CD4-positive, alpha-beta memory T cell (primary cell): ENCODE measurements at regions of chr20 and their contacts with region 1.

Region 1: GRCh38 chr20:41317536-41318270 is at the start of gene ZHX3:
- DNase-seq: peak; percentile 91 to 97 (median 95)
- H3K4me3 ChIP-seq: peak within 1 kb of the TSS; percentile 21 to 74
- H3K4me3 Mint-ChIP-seq: peak within 1 kb of the TSS; percentile 85 to 90 (median 87)
- H3K27ac ChIP-seq: peak within 1 kb of the TSS; percentile 48
- H3K27ac Mint-ChIP-seq: peak within 1 kb of the TSS; percentile 79 to 90 (median 84)
- H3K4me1 ChIP-seq: peaks cover 16% of the 10 kb centered on the region
- H3K4me1 Mint-ChIP-seq: peaks cover 7 to 27% (median 18%) of the 10 kb centered on the region in 4 donors
- H3K27me3 ChIP-seq: no peaks in the 10 kb centered on the region
- H3K27me3 Mint-ChIP-seq: no peaks in the 10 kb centered on the region
- total RNA-seq, gene ZHX3: 5.2 to 6.3 TPM

Region 2: GRCh38 chr20:41003143-41003883 is 314.4 kb before region 1 on chr20:
- CTCF ChIA-PET with region 1: no interaction called
- POLR2A ChIA-PET with region 1: no interaction called
- intact Hi-C with region 1: loop called (anchors 1 kb)
- DNase-seq: peak; percentile 76 to 91 (median 83)
- H3K4me3 ChIP-seq: peak overlapping the region; percentile 19 to 60
- H3K4me3 Mint-ChIP-seq: peak overlapping the region; percentile 78 to 90 (median 82)
- H3K27ac ChIP-seq: peak overlapping the region; percentile 72
- H3K27ac Mint-ChIP-seq: peak overlapping the region; percentile 95 to 99 (median 97)
- H3K4me1 ChIP-seq: peaks cover 13% of the 10 kb centered on the region
- H3K4me1 Mint-ChIP-seq: peaks cover 16 to 41% (median 22%) of the 10 kb centered on the region in 4 donors
- H3K27me3 ChIP-seq: no peaks in the 10 kb centered on the region
- H3K27me3 Mint-ChIP-seq: no peaks in the 10 kb centered on the region

Region 3: GRCh38 chr20:41014557-41015088 is 303.1 kb before region 1 on chr20:
- CTCF ChIA-PET with region 1: no interaction called
- POLR2A ChIA-PET with region 1: no interaction called
- intact Hi-C with region 1: no loop called
- DNase-seq: no peak
- H3K4me3 ChIP-seq: no peak overlapping the region
- H3K4me3 Mint-ChIP-seq: no peak overlapping the region
- H3K27ac ChIP-seq: no peak overlapping the region
- H3K27ac Mint-ChIP-seq: peak overlapping the region in 2 of 7 donors; percentile 7 to 34
- H3K4me1 ChIP-seq: no peaks in the 10 kb centered on the region
- H3K4me1 Mint-ChIP-seq: peaks cover 0 to 14% (median 6%) of the 10 kb centered on the region in 4 donors
- H3K27me3 ChIP-seq: no peaks in the 10 kb centered on the region
- H3K27me3 Mint-ChIP-seq: no peaks in the 10 kb centered on the region

Region 4: GRCh38 chr20:41617931-41618806 is 300.5 kb after region 1 on chr20 and contains the start of gene CHD6:
- CTCF ChIA-PET with region 1: no interaction called
- POLR2A ChIA-PET with region 1: no interaction called
- intact Hi-C with region 1: loop called (anchors 2 kb)
- DNase-seq: peak; percentile 99 to 100 (median 100)
- H3K4me3 ChIP-seq: peak within 1 kb of the TSS; percentile 7 to 69
- H3K4me3 Mint-ChIP-seq: peak within 1 kb of the TSS; percentile 92 to 95 (median 94)
- H3K27ac ChIP-seq: peak within 1 kb of the TSS; percentile 41
- H3K27ac Mint-ChIP-seq: peak within 1 kb of the TSS; percentile 88 to 96 (median 91)
- H3K4me1 ChIP-seq: peaks cover 41% of the 10 kb centered on the region
- H3K4me1 Mint-ChIP-seq: peaks cover 33 to 51% (median 38%) of the 10 kb centered on the region in 4 donors
- H3K27me3 ChIP-seq: no peaks in the 10 kb centered on the region
- H3K27me3 Mint-ChIP-seq: no peaks in the 10 kb centered on the region
- total RNA-seq, gene CHD6: 93.2 to 96.8 TPM